Cardiac septum (tissue), 1 donor: ENCODE measurements at regions of chr9 and their contacts with region 1.

Region 1: GRCh38 chr9:17462869-17463464 is 115.9 kb upstream of the SH3GL2 start:
- DNase-seq: no peak

Region 2: DNA sequence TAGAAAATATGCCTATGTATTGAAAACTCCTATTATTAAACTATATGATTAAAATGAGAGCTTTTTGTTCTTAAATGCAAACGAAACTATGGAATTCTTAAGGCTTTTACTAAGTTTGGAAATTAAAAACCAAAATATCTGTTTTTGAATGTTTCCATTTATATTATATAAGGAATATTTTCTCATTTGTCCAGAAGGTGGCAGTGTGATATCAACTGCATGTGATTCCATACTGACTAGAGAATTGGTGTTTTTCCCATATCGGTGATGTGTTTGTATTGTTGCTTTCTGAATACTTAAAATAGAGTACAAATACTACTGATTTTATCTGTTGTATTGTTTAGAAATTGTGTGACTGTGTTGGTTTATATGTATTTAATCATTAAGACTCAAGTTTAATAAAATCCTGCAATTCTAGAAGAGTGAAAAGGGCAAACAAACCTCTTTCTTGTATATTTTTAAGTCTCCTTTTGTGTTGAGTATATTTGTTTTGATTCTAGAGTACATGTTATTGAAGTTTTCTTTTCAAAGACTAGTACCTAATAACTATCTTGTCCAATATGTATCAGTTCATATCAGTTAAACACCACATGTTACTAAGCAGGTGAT is 1589.3 kb before region 1 on chr9:
- intact Hi-C with region 1: loop called (anchors 5 kb)
- DNase-seq: no peak

Region 3: DNA sequence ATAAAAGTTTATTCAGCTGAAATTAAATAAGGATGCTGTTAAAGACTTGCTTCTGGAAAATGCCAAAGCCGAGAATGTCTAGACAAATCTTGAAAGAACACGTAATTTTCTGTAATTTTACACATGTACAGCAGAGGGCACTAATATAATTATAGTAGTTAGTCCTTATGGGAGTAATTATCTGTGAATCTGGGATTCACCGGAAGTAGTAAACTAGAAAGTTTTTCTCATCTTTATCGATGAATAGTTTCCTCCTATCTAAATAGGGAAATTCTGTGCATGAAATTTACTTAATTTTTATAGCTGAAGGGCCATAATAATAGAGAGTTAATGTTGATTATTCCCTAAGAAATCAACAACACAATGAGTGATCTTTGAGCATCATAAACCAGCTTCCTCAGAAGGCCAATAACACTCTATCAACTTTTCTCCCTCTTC is 346.5 kb before region 1 on chr9:
- intact Hi-C with region 1: loop called (anchors 10 kb)
- DNase-seq: no peak

Region 4: GRCh38 chr9:17387565-17387964 is 75.4 kb before region 1 on chr9:
- intact Hi-C with region 1: no loop called
- DNase-seq: no peak